Activated CD4-positive, alpha-beta memory T cell treated with anti-CD3 and anti-CD28 coated beads, Interleukin-2, amount 10 ng/mL, durations not matched to agents 7 days and 5 days (primary cell): ENCODE measurements at regions of chr6 and their contacts with region 1.

Region 1: DNA sequence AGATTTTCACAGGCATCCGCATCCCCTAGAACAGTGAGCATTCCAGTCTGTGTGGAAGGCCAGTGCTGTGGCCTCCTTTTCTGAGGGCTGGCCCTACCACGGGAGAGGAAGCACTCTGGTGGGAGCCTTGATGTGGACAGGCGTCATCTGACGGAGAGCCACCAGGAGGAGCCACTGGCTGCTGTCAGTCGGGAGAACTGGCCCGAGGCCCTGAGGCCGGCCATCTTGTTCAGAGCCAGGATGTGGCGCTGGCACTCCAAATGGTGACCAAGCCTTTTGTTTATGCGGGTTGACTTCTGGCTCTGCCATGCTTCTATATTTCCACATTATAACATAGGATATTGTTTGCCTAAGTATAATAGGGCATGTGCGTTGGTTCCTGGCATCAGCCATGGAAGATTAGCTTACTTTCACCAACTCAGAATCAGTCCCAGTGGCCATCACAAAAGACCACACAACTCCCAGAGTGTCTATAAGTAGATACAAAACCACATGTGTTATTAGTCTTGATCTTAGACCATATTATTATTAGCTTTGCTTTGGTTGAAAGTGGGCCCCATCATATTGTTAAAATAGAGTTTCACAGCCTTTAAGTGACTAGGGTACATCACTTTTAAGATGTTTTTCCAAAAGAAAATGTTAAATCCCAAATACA is 273.9 kb upstream of the TAB2 start:
- DNase-seq: peak; percentile 45
- H3K4me3 Mint-ChIP-seq: no peak overlapping the region
- H3K27ac Mint-ChIP-seq: no peak overlapping the region
- H3K4me1 Mint-ChIP-seq: peaks cover 55% of the 10 kb centered on the region
- H3K27me3 Mint-ChIP-seq: no peaks in the 10 kb centered on the region

Region 2: DNA sequence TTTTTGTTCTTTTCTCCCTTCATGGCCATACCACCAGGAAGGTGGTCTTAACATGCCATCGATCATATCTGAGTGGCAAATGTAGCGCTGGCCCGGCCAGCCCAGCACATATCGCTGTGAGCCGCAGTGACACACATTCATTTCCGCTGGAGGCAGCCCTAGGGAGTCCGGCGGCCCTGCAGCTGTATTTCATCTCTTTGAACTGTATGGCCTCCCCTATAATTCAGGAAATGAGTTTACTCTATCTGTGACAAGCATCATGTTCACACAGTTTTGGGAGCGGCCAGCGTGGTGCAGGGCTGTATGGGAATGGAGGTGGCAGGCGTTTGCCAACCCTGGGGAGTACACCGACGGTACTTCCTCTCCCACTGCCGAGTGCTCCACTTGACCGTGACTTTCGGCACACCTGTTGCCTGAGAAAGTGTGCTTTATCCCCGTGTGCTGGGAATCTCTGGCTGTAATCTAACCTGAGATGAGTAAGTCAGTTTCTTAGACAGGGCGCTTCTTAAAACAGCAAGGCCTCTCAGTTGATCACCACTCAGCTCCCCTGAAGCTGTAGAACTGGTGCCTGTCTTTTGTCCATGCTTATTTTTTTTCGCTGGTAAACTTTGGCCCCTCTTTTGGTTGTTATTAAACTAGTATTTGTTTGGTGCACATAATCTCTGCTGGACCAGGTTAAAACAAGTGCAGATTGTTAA is 16.8 kb after region 1 on chr6:
- CTCF ChIA-PET with region 1: interaction called, 10 read pairs
- POLR2A ChIA-PET with region 1: interaction called, 10 read pairs
- DNase-seq: peak; percentile 78
- H3K4me3 Mint-ChIP-seq: peak overlapping the region; percentile 63
- H3K27ac Mint-ChIP-seq: peak overlapping the region; percentile 89
- H3K4me1 Mint-ChIP-seq: peaks cover 66% of the 10 kb centered on the region
- H3K27me3 Mint-ChIP-seq: no peaks in the 10 kb centered on the region

Region 3: GRCh38 chr6:149065658-149066556 is 22.3 kb after region 1 on chr6:
- CTCF ChIA-PET with region 1: interaction called, 10 read pairs
- POLR2A ChIA-PET with region 1: interaction called, 10 read pairs
- DNase-seq: peak; percentile 38
- H3K4me3 Mint-ChIP-seq: peak overlapping the region; percentile 12
- H3K27ac Mint-ChIP-seq: peak overlapping the region; percentile 89
- H3K4me1 Mint-ChIP-seq: peaks cover 53% of the 10 kb centered on the region
- H3K27me3 Mint-ChIP-seq: no peaks in the 10 kb centered on the region